Ovary (tissue), 10 donors: ENCODE measurements at regions of chr9 and their contacts with region 1.

Region 1: DNA sequence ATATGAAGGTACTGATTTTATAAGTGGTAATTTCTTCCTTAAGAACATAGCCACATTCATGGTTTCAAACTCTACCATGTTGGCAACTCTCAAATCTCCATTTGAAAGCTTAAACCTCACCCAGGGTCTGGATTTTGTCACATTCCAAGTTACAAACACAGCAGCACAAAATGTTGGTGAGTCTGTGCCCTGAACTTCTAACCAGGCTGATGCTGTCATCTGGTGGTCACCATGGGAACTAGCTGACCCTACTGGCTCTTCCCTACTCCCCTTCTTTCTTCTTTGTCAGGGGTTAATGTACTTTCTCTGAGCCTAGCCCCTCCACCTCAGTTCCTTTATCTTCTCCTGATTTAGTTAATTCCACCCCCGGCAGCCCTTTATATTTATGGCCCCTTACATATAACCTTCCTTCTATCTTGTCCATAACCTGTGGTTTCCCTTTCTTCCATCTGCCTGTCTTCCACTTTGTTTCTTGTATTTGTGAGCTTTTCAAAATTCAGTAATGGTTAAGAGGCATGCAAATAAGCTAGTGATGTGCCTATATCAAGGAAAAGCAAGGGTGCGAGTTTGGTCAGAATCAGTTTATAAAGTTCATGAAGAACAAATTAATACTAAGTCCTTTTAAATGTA is 35.9 kb downstream of the TGFBR1 start:
- DNase-seq: peak in 2 of 5 donors; percentile 11 to 44
- H3K4me3 ChIP-seq: no peak overlapping the region
- H3K27ac ChIP-seq: no peak overlapping the region
- H3K4me1 ChIP-seq: no peaks in the 10 kb centered on the region
- H3K27me3 ChIP-seq: no peaks in the 10 kb centered on the region
- CTCF ChIP-seq: peak; percentile 53 to 64 (median 59)
- EP300 ChIP-seq: no peak
- POLR2A ChIP-seq: no peak

Region 2: GRCh38 chr9:98848450-98849149 is 292.2 kb before region 1 on chr9:
- intact Hi-C with region 1: loop called in 2 of 4 experiments (anchors 10 kb)
- DNase-seq: peak; percentile 86 to 93 (median 90)
- H3K4me3 ChIP-seq: peak overlapping the region; percentile 16
- H3K27ac ChIP-seq: no peak overlapping the region
- H3K4me1 ChIP-seq: no peaks in the 10 kb centered on the region
- H3K27me3 ChIP-seq: no peaks in the 10 kb centered on the region
- CTCF ChIP-seq: peak; percentile 77 to 86 (median 79)
- EP300 ChIP-seq: no peak
- POLR2A ChIP-seq: no peak

Region 3: DNA sequence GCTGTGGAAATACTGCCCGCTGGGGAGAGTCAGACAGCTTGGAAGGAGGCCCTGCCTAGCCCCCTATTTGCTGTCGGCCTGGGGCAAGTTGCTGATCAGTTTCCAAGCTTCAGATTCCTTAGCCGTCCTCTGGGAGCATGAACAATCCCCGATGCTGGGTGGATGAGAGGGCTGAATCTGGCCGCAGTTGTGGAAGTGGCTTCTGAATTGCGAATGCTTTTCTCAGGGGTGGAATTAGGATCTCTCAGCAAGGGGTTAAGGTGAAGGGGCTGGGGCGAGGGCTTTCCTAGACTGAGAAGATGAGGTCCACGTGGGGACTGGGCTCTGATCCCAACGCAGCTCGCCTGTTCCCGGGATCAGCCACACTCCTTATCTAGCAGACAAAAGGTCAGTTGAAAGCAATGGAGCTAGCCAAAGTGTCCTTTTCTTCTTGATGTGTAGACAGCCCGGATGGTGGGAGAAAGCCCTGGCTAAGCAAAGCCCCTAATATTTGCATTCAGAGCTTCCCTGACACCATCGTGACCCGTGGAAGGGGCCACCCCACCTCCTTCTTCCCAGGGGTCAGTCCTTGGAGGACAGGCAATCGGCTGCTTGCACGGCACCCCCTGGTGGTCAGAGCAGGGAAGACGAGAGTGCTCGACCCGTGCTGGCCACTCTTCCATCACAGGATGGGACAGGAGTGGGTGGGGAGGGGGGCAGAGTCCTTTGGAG is 142.2 kb before region 1 on chr9:
- intact Hi-C with region 1: loop called in 1 of 4 experiments (anchors 5 kb)
- DNase-seq: peak; percentile 75 to 88 (median 85)
- H3K4me3 ChIP-seq: no peak overlapping the region
- H3K27ac ChIP-seq: peak overlapping the region in 1 of 2 donors; percentile 26
- H3K4me1 ChIP-seq: peaks cover 17% of the 10 kb centered on the region
- H3K27me3 ChIP-seq: no peaks in the 10 kb centered on the region
- CTCF ChIP-seq: peak; percentile 58 to 88 (median 82)
- EP300 ChIP-seq: no peak
- POLR2A ChIP-seq: no peak

Region 4: GRCh38 chr9:99192786-99193465 is 52.1 kb after region 1 on chr9:
- intact Hi-C with region 1: no loop called
- DNase-seq: no peak
- H3K4me3 ChIP-seq: no peak overlapping the region
- H3K27ac ChIP-seq: no peak overlapping the region
- H3K4me1 ChIP-seq: no peaks in the 10 kb centered on the region
- H3K27me3 ChIP-seq: no peaks in the 10 kb centered on the region
- CTCF ChIP-seq: no peak
- EP300 ChIP-seq: no peak
- POLR2A ChIP-seq: no peak